HEK293 (cell line): ENCODE measurements at regions of chr20 and their contacts with region 1.

Region 1: GRCh38 chr20:31723319-31724078 is 831 bp upstream of the BCL2L1 start:
- H3K4me3 ChIP-seq: peak overlapping the region; percentile 94
- H3K27ac ChIP-seq: peak overlapping the region; percentile 95
- H3K4me1 ChIP-seq: peaks cover 8% of the 10 kb centered on the region; the same call in 1 of the 2 replicates
- CTCF ChIP-seq: peak; percentile 81

Region 2: DNA sequence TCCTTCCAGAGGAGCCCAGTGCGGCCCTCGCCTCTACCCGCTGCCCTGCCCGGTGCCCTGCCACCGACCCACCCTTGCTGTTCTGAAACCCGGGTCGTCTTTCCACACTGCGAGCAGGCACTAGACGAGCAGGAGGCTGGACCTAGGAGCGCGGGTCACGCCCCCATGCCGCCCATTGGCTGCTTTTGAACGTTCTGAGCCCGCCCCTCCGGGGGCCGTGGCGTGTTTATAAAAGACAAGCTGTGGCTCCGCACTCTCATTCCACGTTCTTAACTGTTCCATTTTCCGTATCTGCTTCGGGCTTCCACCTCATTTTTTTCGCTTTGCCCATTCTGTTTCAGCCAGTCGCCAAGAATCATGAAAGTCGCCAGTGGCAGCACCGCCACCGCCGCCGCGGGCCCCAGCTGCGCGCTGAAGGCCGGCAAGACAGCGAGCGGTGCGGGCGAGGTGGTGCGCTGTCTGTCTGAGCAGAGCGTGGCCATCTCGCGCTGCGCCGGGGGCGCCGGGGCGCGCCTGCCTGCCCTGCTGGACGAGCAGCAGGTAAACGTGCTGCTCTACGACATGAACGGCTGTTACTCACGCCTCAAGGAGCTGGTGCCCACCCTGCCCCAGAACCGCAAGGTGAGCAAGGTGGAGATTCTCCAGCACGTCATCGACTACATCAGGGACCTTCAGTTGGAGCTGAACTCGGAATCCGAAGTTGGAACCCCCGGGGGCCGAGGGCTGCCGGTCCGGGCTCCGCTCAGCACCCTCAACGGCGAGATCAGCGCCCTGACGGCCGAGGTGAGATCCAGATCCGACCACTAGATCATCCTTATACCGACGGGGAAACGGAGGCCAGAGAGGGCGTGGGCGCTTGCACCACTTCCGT is 118.2 kb before region 1 on chr20 and contains the start of gene ID1:
- CTCF ChIA-PET with region 1: interaction called, 8 read pairs
- POLR2A ChIA-PET with region 1: interaction called, 15 read pairs
- H3K4me3 ChIP-seq: peak within 1 kb of the TSS; percentile 70
- H3K27ac ChIP-seq: peak within 1 kb of the TSS; percentile 80
- H3K4me1 ChIP-seq: peaks cover 15% of the 10 kb centered on the region
- CTCF ChIP-seq: peak; percentile 32; the same call in 1 of the 2 replicates

Region 3: GRCh38 chr20:31652917-31653396 is 70.5 kb before region 1 on chr20:
- CTCF ChIA-PET with region 1: interaction called, 12 read pairs
- POLR2A ChIA-PET with region 1: interaction called, 6 read pairs
- H3K4me3 ChIP-seq: no peak overlapping the region
- H3K27ac ChIP-seq: no peak overlapping the region
- H3K4me1 ChIP-seq: no peaks in the 10 kb centered on the region
- CTCF ChIP-seq: no peak

Region 4: GRCh38 chr20:31684153-31685015 is 39.1 kb before region 1 on chr20:
- CTCF ChIA-PET with region 1: interaction called, 19 read pairs
- POLR2A ChIA-PET with region 1: interaction called, 3 read pairs
- H3K4me3 ChIP-seq: no peak overlapping the region
- H3K27ac ChIP-seq: no peak overlapping the region
- H3K4me1 ChIP-seq: no peaks in the 10 kb centered on the region
- CTCF ChIP-seq: no peak

Region 5: DNA sequence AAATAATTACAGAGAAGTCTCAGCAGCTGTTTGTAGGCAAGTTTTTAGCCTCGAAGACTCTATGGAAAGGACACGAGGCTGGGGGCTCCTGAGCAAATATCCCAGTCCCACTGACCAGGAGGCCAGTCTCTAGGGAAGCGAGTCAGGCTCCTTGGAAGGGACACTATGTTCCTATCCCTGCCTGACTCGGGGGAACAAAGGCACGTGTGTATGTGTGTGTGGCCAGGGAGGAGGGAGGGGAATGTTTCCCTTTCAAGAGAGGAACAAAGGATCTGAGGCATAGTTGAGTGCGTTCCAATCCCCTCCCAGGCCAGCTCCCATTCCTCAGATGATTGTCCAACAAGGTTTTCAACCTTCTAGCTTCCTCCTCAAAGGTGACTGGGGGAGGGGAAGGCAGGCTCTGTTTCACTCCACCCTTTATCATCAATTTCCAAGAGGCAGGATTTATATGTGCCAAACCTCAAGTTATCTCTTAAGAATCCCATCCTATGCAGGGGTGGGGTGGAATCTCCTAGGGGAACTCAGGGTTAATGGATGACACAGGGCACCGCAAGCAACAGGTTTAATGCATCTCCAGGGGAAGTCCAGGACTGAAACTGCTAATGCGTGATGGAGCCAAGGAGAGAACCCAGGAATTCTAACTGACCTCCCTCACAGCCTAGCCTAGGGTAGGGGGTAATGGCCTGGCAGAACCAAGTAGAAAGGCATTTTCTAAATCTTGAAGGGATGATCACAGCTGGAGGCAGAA is 10.8 kb before region 1 on chr20:
- CTCF ChIA-PET with region 1: interaction called, 33 read pairs
- POLR2A ChIA-PET with region 1: interaction called, 18 read pairs
- H3K4me3 ChIP-seq: no peak overlapping the region
- H3K27ac ChIP-seq: no peak overlapping the region
- H3K4me1 ChIP-seq: peaks cover 13% of the 10 kb centered on the region; the same call in 1 of the 2 replicates
- CTCF ChIP-seq: no peak